B cell (primary cell): ENCODE measurements at regions of chr3 and their contacts with region 1.

Region 1: DNA sequence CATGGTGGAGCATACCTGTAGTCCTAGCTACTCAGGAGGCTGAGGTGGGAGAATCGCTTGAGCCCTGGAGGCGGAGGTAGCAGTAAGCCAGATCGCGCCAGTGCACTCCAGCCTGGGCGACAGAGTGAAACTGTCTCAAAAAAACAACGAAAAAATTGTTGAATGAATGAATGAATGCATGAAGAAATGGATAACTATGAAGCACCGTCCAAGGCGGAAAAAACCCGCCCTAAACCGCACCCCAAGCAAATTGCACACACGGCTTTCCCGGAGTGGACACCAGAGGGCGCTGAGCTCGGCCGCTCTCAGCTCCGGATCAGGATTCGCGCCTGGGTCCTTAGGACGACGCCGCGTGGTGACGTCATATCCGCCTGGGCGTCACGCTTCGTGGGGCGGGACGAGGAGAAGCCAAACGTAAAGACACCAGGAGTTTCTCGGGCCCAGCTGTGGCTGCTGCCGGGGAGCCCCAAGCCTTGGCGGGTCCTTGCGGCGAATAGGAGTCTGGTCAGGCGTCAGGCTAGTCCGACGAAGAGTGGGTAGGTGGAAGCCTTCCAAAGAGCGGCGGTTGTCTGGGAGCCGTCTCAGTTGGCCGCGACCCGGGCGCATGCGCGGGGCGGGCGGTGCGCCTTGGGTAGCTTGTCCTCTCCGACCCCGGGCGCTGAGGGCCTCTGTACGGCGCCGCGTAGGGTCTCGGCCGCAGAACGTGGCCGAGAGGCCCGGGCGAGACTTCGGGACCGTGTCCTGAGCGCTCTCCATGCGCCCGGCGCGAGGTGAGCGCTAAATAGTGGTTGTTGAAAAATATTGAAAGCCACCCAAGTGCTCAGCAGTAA is at the starts of genes HTD2 and RPP14:
- DNase-seq: peak; percentile 99
- ATAC-seq: peak; percentile 90
- H3K4me3 ChIP-seq: peak within 1 kb of the TSS; percentile 74 to 87 (median 83)
- H3K4me3 Mint-ChIP-seq: peak within 1 kb of the TSS; percentile 98
- H3K27ac ChIP-seq: peak within 1 kb of the TSS; percentile 96 to 99
- H3K27ac Mint-ChIP-seq: peak within 1 kb of the TSS; percentile 100
- H3K4me1 ChIP-seq: peaks cover 24 to 27% of the 10 kb centered on the region in 2 donors
- H3K4me1 Mint-ChIP-seq: peaks cover 31% of the 10 kb centered on the region
- H3K27me3 ChIP-seq: no peaks in the 10 kb centered on the region
- H3K27me3 Mint-ChIP-seq: no peaks in the 10 kb centered on the region
- CTCF ChIP-seq: peak; percentile 90
- total RNA-seq, gene HTD2: 8.8 and 9.3 TPM in 2 replicates
- total RNA-seq, gene RPP14: 17.9 and 18.3 TPM in 2 replicates

Region 2: GRCh38 chr3:58177747-58178527 is 128.2 kb before region 1 on chr3:
- CTCF ChIA-PET with region 1: interaction called, 334 read pairs
- POLR2A ChIA-PET with region 1: interaction called, 5 read pairs
- intact Hi-C with region 1: no loop called
- DNase-seq: peak; percentile 90
- ATAC-seq: peak; percentile 96
- H3K4me3 ChIP-seq: peak overlapping the region in 4 of 5 experiments; percentile 38 to 66 (median 56)
- H3K4me3 Mint-ChIP-seq: peak overlapping the region; percentile 86
- H3K27ac ChIP-seq: no peak overlapping the region
- H3K27ac Mint-ChIP-seq: peak overlapping the region; percentile 50
- H3K4me1 ChIP-seq: peaks cover 19 to 24% of the 10 kb centered on the region in 2 donors
- H3K4me1 Mint-ChIP-seq: peaks cover 27% of the 10 kb centered on the region
- H3K27me3 ChIP-seq: peaks cover 0 to 8% (median 3%) of the 10 kb centered on the region in 4 experiments
- H3K27me3 Mint-ChIP-seq: no peaks in the 10 kb centered on the region
- CTCF ChIP-seq: peak; percentile 88

Region 3: DNA sequence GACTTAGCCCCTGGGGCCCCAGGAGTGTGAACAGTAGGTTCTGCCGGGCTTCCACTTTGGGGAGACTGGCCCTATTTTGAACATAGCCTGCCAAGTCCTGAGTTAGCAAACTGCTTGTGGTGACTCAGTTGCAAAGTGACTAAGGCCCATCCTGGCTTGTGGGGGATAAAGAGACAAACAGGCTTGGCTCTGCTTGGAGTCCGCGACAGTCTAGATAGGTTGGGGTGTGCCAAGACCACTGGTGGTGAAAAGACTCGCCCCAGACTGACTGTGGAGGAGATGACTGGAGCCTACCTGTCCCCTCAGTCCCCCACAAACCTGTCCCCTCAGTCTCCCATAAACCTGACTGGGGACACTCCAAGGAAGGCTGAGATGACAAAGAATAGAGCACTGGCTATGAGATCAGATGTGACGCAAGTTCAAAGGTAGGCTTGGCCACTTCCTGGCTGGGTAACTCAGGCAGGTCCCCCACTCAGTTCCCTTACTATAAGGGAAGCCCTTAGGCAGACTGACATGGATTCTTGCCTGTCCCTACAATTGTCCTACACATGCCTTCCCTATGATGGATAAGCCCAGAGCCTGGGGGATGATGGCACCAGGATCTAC is 99.6 kb before region 1 on chr3:
- CTCF ChIA-PET with region 1: interaction called, 10 read pairs
- POLR2A ChIA-PET with region 1: no interaction called
- intact Hi-C with region 1: no loop called
- DNase-seq: no peak
- ATAC-seq: no peak
- H3K4me3 ChIP-seq: no peak overlapping the region
- H3K4me3 Mint-ChIP-seq: no peak overlapping the region
- H3K27ac ChIP-seq: no peak overlapping the region
- H3K27ac Mint-ChIP-seq: no peak overlapping the region
- H3K4me1 ChIP-seq: peaks cover 23 to 27% of the 10 kb centered on the region in 2 donors
- H3K4me1 Mint-ChIP-seq: peaks cover 30% of the 10 kb centered on the region
- H3K27me3 ChIP-seq: no peaks in the 10 kb centered on the region
- H3K27me3 Mint-ChIP-seq: no peaks in the 10 kb centered on the region
- CTCF ChIP-seq: no peak

Region 4: GRCh38 chr3:58324391-58325390 is 18.6 kb after region 1 on chr3:
- CTCF ChIA-PET with region 1: interaction called, 89 read pairs
- POLR2A ChIA-PET with region 1: no interaction called
- intact Hi-C with region 1: loop called (anchors 1 kb)
- DNase-seq: no peak
- ATAC-seq: peak; percentile 39
- H3K4me3 ChIP-seq: no peak overlapping the region
- H3K4me3 Mint-ChIP-seq: peak overlapping the region; percentile 57
- H3K27ac ChIP-seq: peak overlapping the region in 1 of 2 donors; percentile 62
- H3K27ac Mint-ChIP-seq: peak overlapping the region; percentile 74
- H3K4me1 ChIP-seq: peaks cover 21 to 29% of the 10 kb centered on the region in 2 donors
- H3K4me1 Mint-ChIP-seq: peaks cover 38% of the 10 kb centered on the region
- H3K27me3 ChIP-seq: no peaks in the 10 kb centered on the region
- H3K27me3 Mint-ChIP-seq: no peaks in the 10 kb centered on the region
- CTCF ChIP-seq: no peak

Region 5: DNA sequence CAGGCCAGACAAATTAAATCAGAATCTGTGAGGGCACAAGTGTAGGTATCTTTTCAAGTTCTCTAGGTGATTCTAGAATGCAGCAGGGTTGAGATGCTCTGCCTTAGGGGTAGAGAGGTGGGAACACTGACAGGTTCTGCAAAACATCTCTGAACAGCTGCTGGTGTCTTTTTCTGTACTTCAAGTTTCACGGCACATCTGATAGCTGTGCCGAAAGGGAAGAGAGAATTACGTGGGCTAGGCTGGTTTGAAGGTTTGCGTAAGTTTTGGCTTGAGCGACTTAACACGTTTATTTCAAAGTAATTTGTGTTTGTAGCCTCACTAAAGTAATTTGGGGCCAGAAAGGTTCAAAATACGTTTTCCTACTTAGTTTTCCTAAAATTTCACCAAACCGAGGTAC is 49.1 kb after region 1 on chr3:
- CTCF ChIA-PET with region 1: interaction called, 15 read pairs
- POLR2A ChIA-PET with region 1: interaction called, 5 read pairs
- intact Hi-C with region 1: loop called (anchors 1 kb)
- DNase-seq: peak; percentile 81
- ATAC-seq: peak; percentile 53
- H3K4me3 ChIP-seq: peak overlapping the region in 4 of 5 experiments; percentile 6 to 81 (median 16)
- H3K4me3 Mint-ChIP-seq: peak overlapping the region; percentile 99
- H3K27ac ChIP-seq: peak overlapping the region; percentile 94 to 97
- H3K27ac Mint-ChIP-seq: peak overlapping the region; percentile 100
- H3K4me1 ChIP-seq: peaks cover 84 to 85% of the 10 kb centered on the region in 2 donors
- H3K4me1 Mint-ChIP-seq: peaks cover 77% of the 10 kb centered on the region
- H3K27me3 ChIP-seq: no peaks in the 10 kb centered on the region
- H3K27me3 Mint-ChIP-seq: no peaks in the 10 kb centered on the region
- CTCF ChIP-seq: no peak

Region 6: DNA sequence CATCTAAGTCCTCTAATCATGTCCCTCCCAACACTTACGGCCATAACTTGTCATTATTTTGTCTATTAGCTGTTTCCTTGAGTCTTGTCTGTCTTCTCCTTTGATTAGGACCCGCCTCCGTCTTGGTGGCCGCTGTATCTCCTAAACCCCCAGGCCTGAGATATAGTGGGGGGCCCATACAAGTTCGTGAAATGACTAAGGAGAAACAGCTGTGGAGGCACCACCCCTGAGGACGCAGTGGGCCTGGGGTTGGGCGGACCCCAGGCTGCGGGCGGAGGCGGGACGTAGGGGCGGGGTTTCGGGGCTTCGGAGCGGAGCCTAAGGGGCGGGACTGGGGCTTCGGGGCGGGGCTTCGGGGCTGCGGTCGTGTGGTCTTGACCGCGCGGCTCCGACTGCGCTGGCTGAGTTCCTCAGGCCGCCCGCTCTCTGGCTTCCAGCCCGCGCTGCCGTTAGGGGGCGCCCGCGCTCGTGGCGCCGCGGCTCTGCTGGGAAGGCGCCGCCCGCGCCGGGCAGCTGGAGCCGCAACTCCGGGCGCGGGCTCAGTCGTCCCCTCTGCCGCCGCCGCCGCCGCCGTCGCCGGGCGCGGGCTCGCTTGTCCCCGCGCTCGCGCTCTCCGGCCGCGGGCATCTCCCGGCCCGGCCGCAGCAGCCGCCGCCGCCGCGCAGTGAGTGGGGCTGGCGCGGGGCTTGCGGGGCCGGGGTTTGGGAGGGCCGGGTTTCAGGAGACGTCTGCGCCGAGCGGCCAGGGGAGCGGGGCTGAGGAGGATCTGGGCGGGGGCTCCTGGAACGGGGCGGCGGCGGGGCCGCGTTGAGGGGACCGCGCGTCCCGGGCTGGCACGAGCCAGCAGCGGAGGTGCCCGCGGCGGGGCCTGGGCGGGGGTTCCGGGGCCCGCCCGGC is 185.7 kb after region 1 on chr3 and contains the start of gene KCTD6:
- CTCF ChIA-PET with region 1: interaction called, 70 read pairs
- POLR2A ChIA-PET with region 1: interaction called, 15 read pairs
- intact Hi-C with region 1: loop called (anchors 1 kb)
- DNase-seq: peak; percentile 96
- ATAC-seq: peak; percentile 91
- H3K4me3 ChIP-seq: peak within 1 kb of the TSS; percentile 50 to 82 (median 75)
- H3K4me3 Mint-ChIP-seq: peak within 1 kb of the TSS; percentile 93
- H3K27ac ChIP-seq: peak within 1 kb of the TSS; percentile 42 to 50
- H3K27ac Mint-ChIP-seq: peak within 1 kb of the TSS; percentile 87
- H3K4me1 ChIP-seq: peaks cover 21 to 29% of the 10 kb centered on the region in 2 donors
- H3K4me1 Mint-ChIP-seq: peaks cover 46% of the 10 kb centered on the region
- H3K27me3 ChIP-seq: no peaks in the 10 kb centered on the region
- H3K27me3 Mint-ChIP-seq: peaks cover 5% of the 10 kb centered on the region
- CTCF ChIP-seq: peak; percentile 59
- total RNA-seq, gene KCTD6: 14.6 and 16.8 TPM in 2 replicates

Region 7: GRCh38 chr3:58630076-58630709 is 324.1 kb after region 1 on chr3:
- CTCF ChIA-PET with region 1: interaction called, 75 read pairs
- POLR2A ChIA-PET with region 1: interaction called, 3 read pairs
- intact Hi-C with region 1: no loop called
- DNase-seq: peak; percentile 71
- ATAC-seq: peak; percentile 76
- H3K4me3 ChIP-seq: no peak overlapping the region
- H3K4me3 Mint-ChIP-seq: no peak overlapping the region
- H3K27ac ChIP-seq: no peak overlapping the region
- H3K27ac Mint-ChIP-seq: no peak overlapping the region
- H3K4me1 ChIP-seq: peaks cover 0 to 6% of the 10 kb centered on the region in 2 donors
- H3K4me1 Mint-ChIP-seq: no peaks in the 10 kb centered on the region
- H3K27me3 ChIP-seq: peaks cover 0 to 19% (median 0%) of the 10 kb centered on the region in 4 experiments
- H3K27me3 Mint-ChIP-seq: peaks cover 18% of the 10 kb centered on the region
- CTCF ChIP-seq: peak; percentile 92